ENCODE measurements at regions of chr1 and their contacts with region 1.

Region 1: GRCh38 chr1:27445177-27445936 is 44.6 kb downstream of the WASF2 start:
- DNase-seq: peak; percentile 63
- H3K4me3 Mint-ChIP-seq: peak overlapping the region; percentile 70
- H3K27ac Mint-ChIP-seq: peak overlapping the region; percentile 97
- H3K4me1 Mint-ChIP-seq: peaks cover 34% of the 10 kb centered on the region
- H3K27me3 Mint-ChIP-seq: no peaks in the 10 kb centered on the region

Region 2: GRCh38 chr1:27321813-27322577 is 123.4 kb before region 1 on chr1 and contains the start of gene TMEM222:
- intact Hi-C with region 1: no loop called
- DNase-seq: peak; percentile 99
- H3K4me3 Mint-ChIP-seq: peak within 1 kb of the TSS; percentile 97
- H3K27ac Mint-ChIP-seq: peak within 1 kb of the TSS; percentile 93
- H3K4me1 Mint-ChIP-seq: peaks cover 29% of the 10 kb centered on the region
- H3K27me3 Mint-ChIP-seq: peaks cover 5% of the 10 kb centered on the region
- total RNA-seq, gene TMEM222: 39.6 and 41.4 TPM in 2 replicates

Region 3: GRCh38 chr1:27430903-27431600 is 14.3 kb before region 1 on chr1:
- intact Hi-C with region 1: loop called (anchors 1 kb)
- DNase-seq: peak; percentile 80
- H3K4me3 Mint-ChIP-seq: peak overlapping the region; percentile 66
- H3K27ac Mint-ChIP-seq: peak overlapping the region; percentile 80
- H3K4me1 Mint-ChIP-seq: peaks cover 55% of the 10 kb centered on the region
- H3K27me3 Mint-ChIP-seq: no peaks in the 10 kb centered on the region

Region 4: DNA sequence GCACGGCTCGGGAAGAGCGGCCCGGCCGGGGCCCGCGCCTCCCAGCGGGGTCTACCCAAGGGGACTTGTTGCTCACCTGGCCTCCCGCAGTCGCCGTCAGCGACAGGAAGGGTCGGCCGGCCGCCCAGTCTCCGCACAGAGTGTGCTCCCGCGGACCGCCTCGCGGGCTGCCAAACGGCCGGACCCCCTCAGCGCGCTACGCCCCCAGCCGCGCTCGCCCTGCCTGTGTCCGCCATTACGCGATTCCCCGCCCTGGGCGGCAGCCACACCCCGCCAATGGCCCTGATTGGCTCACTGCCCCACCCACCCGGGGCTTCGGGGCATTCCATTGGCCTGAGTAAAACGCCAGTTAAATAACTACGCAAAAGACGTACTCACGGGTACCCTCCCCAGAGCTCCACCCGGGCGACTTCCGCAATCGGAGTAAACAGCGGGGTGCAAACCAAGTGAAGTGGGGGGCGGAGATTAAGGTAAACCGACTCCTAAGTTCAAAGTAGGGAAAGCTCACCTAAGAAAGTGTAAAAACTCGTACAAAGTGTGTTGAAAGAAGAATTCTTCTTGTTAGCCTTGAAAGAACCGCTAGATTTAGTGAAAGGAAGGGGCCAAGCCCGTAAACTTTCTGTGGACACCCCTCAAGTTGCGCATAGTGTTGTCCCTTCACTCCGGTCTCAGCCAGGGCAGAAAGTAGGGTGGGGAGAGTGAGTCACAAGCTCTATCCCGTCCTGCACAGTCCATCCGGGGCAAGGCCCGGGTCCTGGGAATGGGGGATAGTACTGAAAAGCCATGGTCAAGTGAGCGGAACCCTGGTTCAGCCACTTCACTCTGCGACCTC is 44.8 kb after region 1 on chr1 and contains the start of gene WASF2:
- intact Hi-C with region 1: loop called (anchors 1 kb)
- DNase-seq: peak; percentile 99
- H3K4me3 Mint-ChIP-seq: peak within 1 kb of the TSS; percentile 89
- H3K27ac Mint-ChIP-seq: peak within 1 kb of the TSS; percentile 99
- H3K4me1 Mint-ChIP-seq: peaks cover 25% of the 10 kb centered on the region
- H3K27me3 Mint-ChIP-seq: no peaks in the 10 kb centered on the region
- total RNA-seq, gene WASF2: 109 TPM in 2 replicates

Region 5: GRCh38 chr1:27598902-27599528 is 153.7 kb after region 1 on chr1:
- intact Hi-C with region 1: no loop called
- DNase-seq: peak; percentile 81
- H3K4me3 Mint-ChIP-seq: peak overlapping the region; percentile 55
- H3K27ac Mint-ChIP-seq: peak overlapping the region; percentile 43
- H3K4me1 Mint-ChIP-seq: peaks cover 34% of the 10 kb centered on the region
- H3K27me3 Mint-ChIP-seq: no peaks in the 10 kb centered on the region